Psoas muscle (tissue), 8 donors: ENCODE measurements at regions of chr19 and their contacts with region 1.

Region 1: GRCh38 chr19:1173845-1174809 is at the start of gene SBNO2:
- DNase-seq: peak; percentile 91 to 95
- ATAC-seq: peak; percentile 78 to 85 (median 81)
- H3K4me3 ChIP-seq: peak within 1 kb of the TSS; percentile 87
- H3K27ac ChIP-seq: peak within 1 kb of the TSS; percentile 92
- H3K4me1 ChIP-seq: peaks cover 27% of the 10 kb centered on the region
- H3K27me3 ChIP-seq: peaks cover 0 to 7% (median 2%) of the 10 kb centered on the region in 3 donors
- CTCF ChIP-seq: no peak
- total RNA-seq, gene SBNO2: 20.9 to 138 (median 76.9) TPM

Region 2: DNA sequence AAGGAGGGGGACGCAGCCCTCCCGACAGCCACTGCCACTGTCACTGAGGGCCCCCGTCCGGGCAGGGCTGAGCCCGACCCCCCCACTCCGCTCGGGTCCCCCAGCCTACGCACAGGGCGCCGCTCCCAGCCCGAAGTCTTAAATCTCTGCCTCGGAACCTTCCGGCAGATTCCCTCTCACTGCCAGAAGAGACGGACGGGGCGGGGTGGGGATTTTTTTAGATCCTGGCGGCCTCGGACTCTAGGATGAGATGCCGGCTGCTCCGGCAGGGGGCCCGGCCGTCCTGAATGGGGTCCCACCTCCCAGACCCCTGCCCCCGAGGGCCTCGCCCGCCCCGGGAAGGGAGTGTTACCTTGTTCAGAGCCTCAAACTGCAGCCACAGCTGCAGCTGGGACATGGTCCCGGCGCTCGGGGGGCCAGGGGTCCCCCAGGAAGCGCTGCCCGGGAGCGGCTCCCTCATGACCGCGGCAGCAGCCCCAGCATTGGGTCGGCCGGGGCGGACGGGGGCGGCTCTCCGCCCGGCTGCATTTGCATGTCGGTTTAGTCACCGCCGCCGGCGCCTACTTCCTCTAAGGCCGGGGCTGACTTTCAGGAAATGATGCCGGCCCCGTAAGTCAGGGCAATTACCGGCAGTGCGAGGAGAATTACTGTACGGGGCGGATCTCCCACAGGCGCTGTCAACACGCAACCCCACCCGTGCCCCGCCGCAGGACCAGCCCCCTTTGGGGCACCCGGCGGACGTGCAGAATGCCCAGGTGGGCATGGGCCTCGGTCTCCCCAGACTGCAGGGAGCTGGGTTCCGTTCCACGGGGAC is 42.2 kb before region 1 on chr19:
- intact Hi-C with region 1: loop called in 1 of 2 experiments (anchors 5 kb)
- DNase-seq: peak; percentile 89 to 90
- ATAC-seq: peak; percentile 71 to 79 (median 75)
- H3K4me3 ChIP-seq: peak overlapping the region; percentile 90
- H3K27ac ChIP-seq: peak overlapping the region; percentile 86
- H3K4me1 ChIP-seq: peaks cover 21% of the 10 kb centered on the region
- H3K27me3 ChIP-seq: no peaks in the 10 kb centered on the region
- CTCF ChIP-seq: no peak